B cell (primary cell): ENCODE measurements at regions of chr7 and their contacts with region 1.

Region 1: DNA sequence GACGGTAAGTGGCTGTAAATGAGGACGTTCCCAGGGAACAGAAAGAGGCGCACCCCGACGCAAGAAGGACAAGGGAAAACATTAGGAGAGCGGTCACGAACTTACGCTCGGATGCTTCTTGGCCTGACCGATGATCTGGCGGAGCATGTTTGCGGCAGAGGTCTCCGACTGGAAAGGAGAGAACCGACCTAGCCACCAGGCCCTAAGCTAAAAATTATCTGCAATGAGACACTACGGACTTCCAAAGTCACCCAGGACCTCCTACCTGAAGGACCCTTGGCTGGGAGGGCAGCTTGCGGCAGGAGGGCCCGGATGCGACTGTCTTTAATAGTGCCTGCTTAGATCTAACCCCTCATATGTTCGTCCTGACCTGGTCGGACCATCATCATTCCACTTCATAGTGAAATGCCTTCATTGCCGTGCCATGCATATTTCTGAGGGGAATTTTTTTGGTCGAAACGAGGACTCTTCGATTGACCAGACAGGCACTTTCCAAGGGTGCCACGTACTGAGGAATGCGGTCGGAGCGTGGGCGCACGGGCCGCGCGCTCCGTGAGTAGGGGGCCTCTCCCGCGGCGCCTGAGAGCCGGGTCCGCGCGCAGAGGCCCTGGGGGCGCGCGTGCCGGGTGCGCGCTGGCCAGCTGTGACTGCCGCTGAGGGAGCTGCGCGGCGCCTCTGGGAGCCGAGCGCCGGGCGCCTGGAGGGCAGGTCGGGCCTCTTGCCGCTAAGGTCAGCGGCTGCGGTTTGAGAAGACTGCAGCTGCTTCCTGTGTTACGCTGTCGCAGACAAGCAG is 33.6 kb upstream of the PHF14 start:
- DNase-seq: peak; percentile 98
- ATAC-seq: peak; percentile 89
- H3K4me3 ChIP-seq: peak overlapping the region; percentile 81 to 99 (median 90)
- H3K4me3 Mint-ChIP-seq: no peak overlapping the region
- H3K27ac ChIP-seq: peak overlapping the region; percentile 93 to 94
- H3K27ac Mint-ChIP-seq: no peak overlapping the region
- H3K4me1 ChIP-seq: peaks cover 19 to 27% of the 10 kb centered on the region in 2 donors
- H3K4me1 Mint-ChIP-seq: peaks cover 13% of the 10 kb centered on the region
- H3K27me3 ChIP-seq: no peaks in the 10 kb centered on the region
- H3K27me3 Mint-ChIP-seq: no peaks in the 10 kb centered on the region
- CTCF ChIP-seq: no peak

Region 2: GRCh38 chr7:9869566-9869965 is 1070.5 kb before region 1 on chr7:
- CTCF ChIA-PET with region 1: no interaction called
- POLR2A ChIA-PET with region 1: no interaction called
- intact Hi-C with region 1: no loop called
- DNase-seq: no peak
- ATAC-seq: no peak
- H3K4me3 ChIP-seq: no peak overlapping the region
- H3K4me3 Mint-ChIP-seq: no peak overlapping the region
- H3K27ac ChIP-seq: no peak overlapping the region
- H3K27ac Mint-ChIP-seq: no peak overlapping the region
- H3K4me1 ChIP-seq: no peaks in the 10 kb centered on the region
- H3K4me1 Mint-ChIP-seq: no peaks in the 10 kb centered on the region
- H3K27me3 ChIP-seq: no peaks in the 10 kb centered on the region
- H3K27me3 Mint-ChIP-seq: no peaks in the 10 kb centered on the region
- CTCF ChIP-seq: no peak

Region 3: GRCh38 chr7:10950494-10950893 is 10.4 kb after region 1 on chr7:
- CTCF ChIA-PET with region 1: no interaction called
- POLR2A ChIA-PET with region 1: no interaction called
- intact Hi-C with region 1: no loop called
- DNase-seq: no peak
- ATAC-seq: no peak
- H3K4me3 ChIP-seq: no peak overlapping the region
- H3K4me3 Mint-ChIP-seq: no peak overlapping the region
- H3K27ac ChIP-seq: no peak overlapping the region
- H3K27ac Mint-ChIP-seq: no peak overlapping the region
- H3K4me1 ChIP-seq: no peaks in the 10 kb centered on the region
- H3K4me1 Mint-ChIP-seq: peaks cover 2% of the 10 kb centered on the region
- H3K27me3 ChIP-seq: no peaks in the 10 kb centered on the region
- H3K27me3 Mint-ChIP-seq: peaks cover 3% of the 10 kb centered on the region
- CTCF ChIP-seq: no peak

Region 4: GRCh38 chr7:10973061-10973944 is 33.2 kb after region 1 on chr7 and contains the start of gene PHF14:
- CTCF ChIA-PET with region 1: interaction called, 14 read pairs
- POLR2A ChIA-PET with region 1: interaction called, 33 read pairs
- intact Hi-C with region 1: loop called (anchors 1 kb)
- DNase-seq: peak; percentile 96
- ATAC-seq: peak; percentile 95
- H3K4me3 ChIP-seq: peak within 1 kb of the TSS; percentile 71 to 97 (median 82)
- H3K4me3 Mint-ChIP-seq: peak within 1 kb of the TSS; percentile 92
- H3K27ac ChIP-seq: peak within 1 kb of the TSS; percentile 65 to 77
- H3K27ac Mint-ChIP-seq: peak within 1 kb of the TSS; percentile 93
- H3K4me1 ChIP-seq: peaks cover 20 to 27% of the 10 kb centered on the region in 2 donors
- H3K4me1 Mint-ChIP-seq: peaks cover 44% of the 10 kb centered on the region
- H3K27me3 ChIP-seq: no peaks in the 10 kb centered on the region
- H3K27me3 Mint-ChIP-seq: no peaks in the 10 kb centered on the region
- CTCF ChIP-seq: no peak
- total RNA-seq, gene PHF14: 43.7 and 45.1 TPM in 2 replicates

Region 5: GRCh38 chr7:10981317-10981716 is 41.2 kb after region 1 on chr7:
- CTCF ChIA-PET with region 1: no interaction called
- POLR2A ChIA-PET with region 1: interaction called, 12 read pairs
- intact Hi-C with region 1: no loop called
- DNase-seq: no peak
- ATAC-seq: no peak
- H3K4me3 ChIP-seq: no peak overlapping the region
- H3K4me3 Mint-ChIP-seq: no peak overlapping the region
- H3K27ac ChIP-seq: no peak overlapping the region
- H3K27ac Mint-ChIP-seq: no peak overlapping the region
- H3K4me1 ChIP-seq: peaks cover 0 to 6% of the 10 kb centered on the region in 2 donors
- H3K4me1 Mint-ChIP-seq: peaks cover 42% of the 10 kb centered on the region
- H3K27me3 ChIP-seq: no peaks in the 10 kb centered on the region
- H3K27me3 Mint-ChIP-seq: no peaks in the 10 kb centered on the region
- CTCF ChIP-seq: no peak

Region 6: DNA sequence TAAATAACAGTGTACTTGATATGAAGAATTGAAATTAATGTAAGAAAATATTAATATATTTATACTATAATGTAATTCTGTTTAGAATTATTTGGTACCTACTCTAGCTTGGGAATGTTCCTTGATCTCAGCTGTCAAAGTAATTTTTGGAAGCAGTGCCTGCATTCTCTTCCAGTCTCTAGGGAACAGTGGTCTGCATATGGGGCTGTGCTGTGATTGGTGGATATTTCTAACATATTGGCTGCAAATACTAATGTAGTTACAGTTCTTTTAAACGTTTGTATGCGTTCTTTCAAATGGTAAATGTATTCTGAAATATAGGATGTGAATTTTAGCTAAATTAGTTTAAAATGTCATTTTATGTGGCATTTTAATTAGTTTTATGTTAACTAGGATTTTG is 120.8 kb after region 1 on chr7:
- CTCF ChIA-PET with region 1: interaction called, 4 read pairs
- POLR2A ChIA-PET with region 1: no interaction called
- intact Hi-C with region 1: loop called (anchors 10 kb)
- DNase-seq: no peak
- ATAC-seq: no peak
- H3K4me3 ChIP-seq: no peak overlapping the region
- H3K4me3 Mint-ChIP-seq: no peak overlapping the region
- H3K27ac ChIP-seq: no peak overlapping the region
- H3K27ac Mint-ChIP-seq: no peak overlapping the region
- H3K4me1 ChIP-seq: no peaks in the 10 kb centered on the region
- H3K4me1 Mint-ChIP-seq: no peaks in the 10 kb centered on the region
- H3K27me3 ChIP-seq: no peaks in the 10 kb centered on the region
- H3K27me3 Mint-ChIP-seq: no peaks in the 10 kb centered on the region
- CTCF ChIP-seq: no peak

Region 7: DNA sequence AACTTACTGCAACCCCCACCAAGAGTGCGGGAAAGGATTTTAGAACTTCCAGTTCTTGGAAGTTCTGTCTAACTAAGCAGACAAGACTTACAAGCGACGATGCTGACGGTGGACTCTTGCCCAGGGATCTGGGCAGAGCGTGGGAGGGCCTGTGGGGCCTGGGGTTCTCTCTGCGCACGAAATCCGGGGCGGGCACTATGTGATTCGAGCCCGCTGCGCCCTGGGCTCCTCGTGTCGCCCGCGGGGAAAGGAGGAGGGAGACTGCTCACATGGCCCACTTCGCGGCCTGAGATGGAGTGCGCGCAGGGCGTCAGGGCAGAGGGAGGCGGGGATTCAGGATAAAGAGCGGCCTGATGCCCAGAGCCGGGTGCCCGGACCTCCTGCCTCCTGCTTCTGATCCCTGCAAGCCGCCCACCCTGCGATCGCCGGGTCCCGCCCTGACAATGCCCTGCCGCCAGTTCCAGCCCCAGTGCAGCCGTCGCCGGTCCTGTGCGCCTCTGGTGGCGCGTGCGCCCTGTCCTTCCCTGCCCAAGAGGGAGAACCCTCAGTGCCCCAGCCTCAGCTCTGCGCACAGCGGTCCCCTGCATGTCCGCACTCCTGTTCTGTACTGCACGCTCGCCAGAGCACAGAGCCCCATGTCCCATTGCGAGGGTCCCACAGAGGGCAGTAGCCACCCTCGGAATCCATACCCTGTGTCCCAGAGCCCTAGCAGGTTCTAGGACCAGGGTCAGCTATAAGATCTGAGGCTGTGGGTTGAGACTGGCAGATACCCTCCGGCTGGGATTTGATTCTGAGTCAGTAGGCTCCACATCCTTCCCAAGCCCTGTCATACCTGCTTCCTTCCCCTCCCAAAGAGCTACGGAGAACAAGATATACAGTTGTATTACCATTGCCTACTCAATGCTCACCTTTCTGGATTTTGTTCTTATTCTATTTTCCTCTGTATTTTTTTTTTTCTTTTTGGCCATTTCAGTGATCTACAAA is 1171.6 kb after region 1 on chr7:
- CTCF ChIA-PET with region 1: no interaction called
- POLR2A ChIA-PET with region 1: no interaction called
- intact Hi-C with region 1: no loop called
- DNase-seq: no peak
- ATAC-seq: no peak
- H3K4me3 ChIP-seq: no peak overlapping the region
- H3K4me3 Mint-ChIP-seq: no peak overlapping the region
- H3K27ac ChIP-seq: no peak overlapping the region
- H3K27ac Mint-ChIP-seq: no peak overlapping the region
- H3K4me1 ChIP-seq: no peaks in the 10 kb centered on the region
- H3K4me1 Mint-ChIP-seq: peaks cover 3% of the 10 kb centered on the region
- H3K27me3 ChIP-seq: peaks cover 0 to 10% (median 4%) of the 10 kb centered on the region in 4 experiments
- H3K27me3 Mint-ChIP-seq: peaks cover 45% of the 10 kb centered on the region
- CTCF ChIP-seq: no peak

Region 8: DNA sequence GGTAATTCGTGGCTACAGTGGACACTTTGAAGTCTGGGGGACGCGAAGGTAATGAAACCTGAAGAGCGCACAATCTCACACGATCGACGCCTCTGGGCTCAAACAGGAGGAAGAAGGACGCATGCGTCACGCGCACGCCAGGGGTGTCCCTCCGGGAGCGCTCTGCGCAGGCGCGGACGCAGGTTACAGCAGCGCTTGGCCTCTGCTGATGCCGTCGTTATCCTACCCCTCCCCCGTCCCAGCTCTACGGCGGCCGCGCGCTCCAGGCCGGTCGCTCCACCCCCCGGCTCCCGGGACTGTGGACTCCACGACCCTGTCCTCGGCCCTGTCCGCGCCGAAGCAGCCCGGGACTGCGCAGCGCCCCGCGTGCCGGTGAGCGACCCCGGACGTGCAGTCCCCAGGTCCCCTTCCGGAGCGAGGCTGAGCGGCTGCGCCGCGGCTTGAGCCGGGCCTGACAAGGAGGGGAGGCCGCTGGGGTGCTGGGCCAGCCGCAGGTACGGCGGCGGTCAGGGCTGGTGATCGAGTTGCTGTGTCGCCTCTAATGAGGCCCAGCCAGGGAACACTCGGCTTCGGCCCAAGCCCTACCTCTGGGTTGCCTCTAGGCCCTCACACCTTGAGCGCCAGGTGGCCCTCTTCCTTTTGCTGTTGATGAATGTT is 1271.1 kb after region 1 on chr7 and contains the start of gene TMEM106B:
- CTCF ChIA-PET with region 1: no interaction called
- POLR2A ChIA-PET with region 1: interaction called, 3 read pairs
- intact Hi-C with region 1: loop called (anchors 5 kb)
- DNase-seq: peak; percentile 97
- ATAC-seq: peak; percentile 90
- H3K4me3 ChIP-seq: peak within 1 kb of the TSS; percentile 76 to 100 (median 82)
- H3K4me3 Mint-ChIP-seq: peak within 1 kb of the TSS; percentile 94
- H3K27ac ChIP-seq: peak within 1 kb of the TSS; percentile 87 to 90
- H3K27ac Mint-ChIP-seq: peak within 1 kb of the TSS; percentile 95
- H3K4me1 ChIP-seq: peaks cover 12 to 13% of the 10 kb centered on the region in 2 donors
- H3K4me1 Mint-ChIP-seq: peaks cover 26% of the 10 kb centered on the region
- H3K27me3 ChIP-seq: peaks cover 0 to 4% (median 2%) of the 10 kb centered on the region in 4 experiments
- H3K27me3 Mint-ChIP-seq: peaks cover 19% of the 10 kb centered on the region
- CTCF ChIP-seq: no peak
- total RNA-seq, gene TMEM106B: 28.3 and 30.2 TPM in 2 replicates